ENCODE measurements at regions of chr10 and their contacts with region 1.

Region 1: DNA sequence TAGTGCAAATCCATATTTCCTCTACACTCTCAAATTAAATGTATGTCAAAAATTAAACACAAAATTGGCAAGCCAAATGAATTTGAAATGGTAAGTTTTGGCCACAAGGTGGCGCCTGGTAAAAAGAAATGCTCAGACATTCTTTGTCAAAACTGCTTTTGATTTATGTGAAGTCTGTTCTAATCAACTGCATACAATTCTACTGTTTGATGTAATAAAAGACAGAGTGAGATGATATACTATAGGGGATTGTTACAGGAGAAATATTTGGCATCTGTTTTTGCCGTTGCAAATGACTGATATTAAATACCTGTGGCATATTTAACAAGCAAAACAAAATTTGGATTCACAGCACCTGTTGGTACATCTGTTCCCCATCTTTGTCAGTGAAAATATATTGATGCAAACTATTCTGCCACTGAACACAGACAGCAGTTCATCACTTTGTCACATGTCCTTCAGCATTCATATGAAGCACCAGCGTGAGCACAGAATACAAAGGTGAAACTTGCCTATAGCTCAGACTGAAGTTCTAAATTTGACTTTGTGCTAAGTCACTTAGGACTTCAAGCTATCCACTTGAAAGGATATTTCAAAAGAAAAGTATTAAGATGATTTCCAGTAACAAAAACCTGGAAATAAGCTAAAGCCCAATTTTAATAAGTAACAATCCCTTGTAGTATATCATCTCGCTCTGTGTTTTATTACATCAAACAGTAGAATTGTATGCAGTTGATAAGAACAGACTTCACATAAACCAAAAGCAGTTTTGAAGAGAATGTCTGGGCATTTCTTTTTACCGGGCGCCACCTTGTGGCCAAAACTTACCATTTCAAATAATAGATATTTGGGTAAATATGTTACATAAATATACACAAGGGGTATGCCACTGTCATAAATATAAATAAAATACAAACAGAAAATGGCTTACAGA is 10.2 kb upstream of the CH25H start:
- DNase-seq: peak; percentile 80
- ATAC-seq: peak; percentile 54

Region 2: GRCh38 chr10:89029785-89030437 is 187.4 kb before region 1 on chr10:
- intact Hi-C with region 1: loop called (anchors 10 kb)
- DNase-seq: peak; percentile 89
- ATAC-seq: peak; percentile 83

Region 3: DNA sequence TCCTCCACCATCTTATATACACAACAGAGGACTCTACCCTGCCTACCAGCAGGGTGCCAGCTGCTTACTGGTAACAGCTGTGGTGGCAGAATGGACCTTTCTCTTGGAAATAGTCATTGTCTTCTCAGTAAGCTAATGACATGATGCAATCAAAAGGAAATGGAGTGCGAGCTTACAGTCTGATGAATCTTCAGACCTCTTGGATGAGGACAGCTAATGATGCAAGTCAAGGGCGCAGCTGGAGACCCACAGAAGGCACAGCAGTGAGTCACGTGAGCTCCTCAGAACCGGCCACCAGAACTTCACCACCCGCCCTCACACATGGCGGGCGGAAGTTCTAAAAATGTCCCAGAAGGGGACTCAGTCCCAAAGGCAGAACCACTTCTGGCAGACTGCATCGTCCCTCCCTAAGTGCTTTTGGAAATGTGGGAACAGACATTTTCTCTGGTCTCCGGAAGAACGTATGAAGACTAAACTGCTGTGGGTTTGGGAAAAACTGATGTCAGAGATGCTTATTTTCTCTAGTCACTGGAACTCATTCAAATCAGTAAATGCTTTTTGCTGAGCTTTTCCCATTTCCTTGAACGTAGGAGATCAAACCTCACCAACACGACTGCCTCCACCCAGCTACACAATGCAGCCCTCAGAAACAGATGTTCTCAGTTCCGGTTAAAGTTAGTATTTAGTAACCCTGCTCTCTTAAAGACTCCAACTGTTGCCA is 130.4 kb before region 1 on chr10:
- intact Hi-C with region 1: no loop called
- DNase-seq: peak; percentile 79
- ATAC-seq: peak; percentile 97

Region 4: GRCh38 chr10:89163265-89163995 is 53.9 kb before region 1 on chr10:
- intact Hi-C with region 1: no loop called
- DNase-seq: no peak
- ATAC-seq: peak; percentile 76

Region 5: DNA sequence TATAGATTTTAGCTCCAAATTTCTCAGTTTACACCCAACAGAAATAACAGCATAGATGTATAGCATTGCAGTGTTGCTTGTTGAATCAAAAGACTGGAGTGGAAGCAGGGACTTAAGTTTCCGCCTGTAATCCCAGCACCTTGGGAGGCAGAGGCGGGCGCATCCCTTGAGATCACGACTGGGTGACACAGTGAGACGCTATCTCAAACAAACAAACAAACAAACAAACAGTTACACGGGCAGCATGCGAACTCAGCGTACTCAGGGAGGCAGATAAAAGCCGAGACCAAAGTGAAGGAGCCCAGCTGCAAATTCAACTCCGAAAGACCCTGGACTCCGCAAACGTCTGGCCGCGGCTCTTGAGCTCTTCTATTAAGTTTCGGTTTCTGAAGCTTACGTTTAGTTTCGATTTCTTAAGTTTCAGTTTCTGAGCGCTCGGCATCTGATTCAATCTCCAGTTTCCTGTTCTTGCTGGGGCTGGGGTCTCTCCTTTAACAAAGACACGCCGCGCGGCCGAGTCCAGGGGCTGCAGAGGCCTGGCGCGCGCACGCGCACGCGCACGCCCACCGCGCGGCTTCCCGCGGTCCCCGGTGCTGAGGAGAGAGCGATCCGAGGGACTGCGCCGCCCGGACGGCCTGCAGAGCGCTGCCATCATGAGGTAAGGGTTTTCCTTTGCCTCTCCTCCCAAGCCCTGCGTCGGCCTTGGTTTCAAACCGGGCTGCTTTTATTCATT is 197.0 kb after region 1 on chr10 and contains the start of gene IFIT5:
- intact Hi-C with region 1: no loop called
- DNase-seq: peak; percentile 84
- ATAC-seq: peak; percentile 93
- total RNA-seq, gene IFIT5: 17.4 TPM

Measured in sciatic nerve (tissue), 2 donors.